ENCODE measurements at regions of chr7 and their contacts with region 1.

Region 1: GRCh38 chr7:70098133-70098561 is 499.9 kb downstream of the AUTS2 start:
- DNase-seq: peak; percentile 95
- H3K4me3 ChIP-seq: no peak overlapping the region
- H3K27ac ChIP-seq: no peak overlapping the region
- H3K4me1 ChIP-seq: peaks cover 47% of the 10 kb centered on the region
- H3K27me3 ChIP-seq: peaks cover 56% of the 10 kb centered on the region
- CTCF ChIP-seq: no peak

Region 2: DNA sequence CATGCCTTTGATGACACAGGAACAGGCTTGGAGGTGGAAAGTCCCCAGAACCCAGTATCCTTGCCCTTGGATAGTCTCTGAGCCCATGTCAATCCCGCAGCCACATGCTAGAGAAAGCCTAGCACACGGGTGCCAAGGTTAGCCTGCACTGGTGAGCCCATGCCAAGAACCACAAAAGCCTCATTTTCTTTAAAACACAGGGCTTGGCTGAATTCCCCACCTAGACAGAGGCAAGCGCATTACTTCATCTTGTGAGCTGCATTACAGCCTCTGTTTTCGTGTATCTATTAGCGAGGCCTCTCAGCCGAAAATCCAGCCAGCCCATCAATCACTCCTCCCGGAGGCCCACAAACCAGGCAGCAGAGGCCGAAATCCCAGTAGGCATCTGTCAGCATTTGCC is 814.7 kb before region 1 on chr7:
- CTCF ChIA-PET with region 1: no interaction called
- POLR2A ChIA-PET with region 1: no interaction called
- intact Hi-C with region 1: no loop called
- DNase-seq: no peak
- H3K4me3 ChIP-seq: no peak overlapping the region
- H3K27ac ChIP-seq: no peak overlapping the region
- H3K4me1 ChIP-seq: no peaks in the 10 kb centered on the region
- H3K27me3 ChIP-seq: no peaks in the 10 kb centered on the region
- CTCF ChIP-seq: no peak

Region 3: GRCh38 chr7:69696054-69696591 is 402.0 kb before region 1 on chr7:
- CTCF ChIA-PET with region 1: no interaction called
- POLR2A ChIA-PET with region 1: no interaction called
- intact Hi-C with region 1: no loop called
- DNase-seq: no peak
- H3K4me3 ChIP-seq: no peak overlapping the region
- H3K27ac ChIP-seq: no peak overlapping the region
- H3K4me1 ChIP-seq: peaks cover 10% of the 10 kb centered on the region
- H3K27me3 ChIP-seq: no peaks in the 10 kb centered on the region
- CTCF ChIP-seq: no peak

Region 4: DNA sequence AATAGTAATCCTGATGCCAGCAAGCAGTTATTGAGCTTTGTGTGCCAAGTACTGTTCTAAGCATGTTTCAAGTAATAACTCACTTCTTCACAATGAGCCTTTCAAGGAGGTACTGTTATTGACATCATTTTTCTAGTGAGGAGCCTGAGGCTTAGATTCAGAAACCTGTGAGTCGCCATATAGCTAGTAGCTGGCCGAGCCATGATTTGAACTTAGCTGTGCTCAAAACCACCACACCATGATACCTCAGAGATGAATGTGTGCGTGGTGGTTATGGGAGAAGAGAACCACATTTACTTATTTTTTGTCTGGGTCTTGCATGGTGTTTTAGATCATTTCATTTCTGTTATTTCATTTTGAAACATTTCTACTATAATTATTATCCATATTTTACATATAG is 79.0 kb after region 1 on chr7:
- CTCF ChIA-PET with region 1: no interaction called
- POLR2A ChIA-PET with region 1: interaction called, 11 read pairs
- intact Hi-C with region 1: no loop called
- DNase-seq: no peak
- H3K4me3 ChIP-seq: no peak overlapping the region
- H3K27ac ChIP-seq: no peak overlapping the region
- H3K4me1 ChIP-seq: no peaks in the 10 kb centered on the region
- H3K27me3 ChIP-seq: no peaks in the 10 kb centered on the region
- CTCF ChIP-seq: no peak